ENCODE measurements at regions of chr15 and their contacts with region 1.

Region 1: DNA sequence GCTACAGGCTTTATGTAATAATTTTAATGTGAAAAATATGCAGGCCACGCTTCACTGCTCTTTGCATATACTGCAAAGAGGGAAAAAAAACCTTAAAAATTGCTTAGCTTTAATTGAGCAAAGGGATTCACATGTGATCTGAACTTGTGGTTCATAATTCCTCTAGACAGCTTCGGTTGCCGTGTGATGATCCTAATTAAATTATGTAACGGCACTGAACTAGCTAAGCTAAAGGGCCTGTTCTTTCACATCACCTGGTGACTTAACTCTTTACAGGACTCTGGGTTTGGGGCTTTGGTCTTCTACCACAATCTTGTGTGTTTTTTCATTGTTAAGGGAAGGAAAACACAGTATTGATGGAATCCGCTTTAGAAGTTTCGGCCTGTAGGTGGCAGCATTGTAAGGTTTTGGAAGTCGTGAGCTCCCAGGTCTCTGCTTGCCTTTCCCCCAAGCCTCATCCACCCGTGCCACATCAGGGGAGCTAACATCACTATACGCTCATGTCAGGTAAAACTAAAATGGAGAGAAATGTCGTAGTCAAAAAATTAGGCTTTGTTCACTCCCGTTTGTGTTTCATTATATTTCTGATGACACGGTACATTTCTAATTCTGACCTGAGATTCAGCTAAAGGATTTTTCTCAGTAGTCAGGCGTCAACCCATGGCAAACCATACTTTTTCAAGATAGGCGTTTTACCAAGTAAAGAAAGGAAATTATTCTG is 205.6 kb upstream of the DPH6 start:
- DNase-seq: peak; percentile 28 to 62
- ATAC-seq: peak; percentile 68 to 89 (median 72)
- H3K4me3 ChIP-seq: peak overlapping the region; percentile 10
- H3K27ac ChIP-seq: no peak overlapping the region
- H3K4me1 ChIP-seq: no peaks in the 10 kb centered on the region
- H3K27me3 ChIP-seq: no peaks in the 10 kb centered on the region
- CTCF ChIP-seq: peak; percentile 79

Region 2: DNA sequence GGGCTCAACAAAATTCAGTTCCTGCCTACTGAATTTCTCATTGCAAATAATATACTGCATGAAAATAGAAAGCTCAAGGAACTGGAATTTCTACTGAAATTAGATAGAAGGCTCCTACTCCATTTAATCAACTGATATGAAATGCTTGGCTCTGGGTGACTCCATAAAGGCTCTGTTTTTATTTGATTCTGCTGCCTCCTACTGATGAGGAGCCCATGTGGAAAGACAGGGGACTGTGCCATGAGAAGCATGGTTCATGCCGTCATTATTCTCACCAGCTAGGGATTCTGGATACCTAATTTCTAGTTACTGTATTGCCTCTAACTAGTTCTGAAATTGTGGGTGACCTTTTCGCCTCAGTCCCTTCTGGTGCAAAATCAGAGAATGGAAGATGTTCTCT is 160.6 kb after region 1 on chr15:
- intact Hi-C with region 1: loop called in 1 of 2 experiments (anchors 10 kb)
- DNase-seq: no peak
- ATAC-seq: peak in 1 of 4 donors; percentile 44
- H3K4me3 ChIP-seq: no peak overlapping the region
- H3K27ac ChIP-seq: no peak overlapping the region
- H3K4me1 ChIP-seq: no peaks in the 10 kb centered on the region
- H3K27me3 ChIP-seq: peaks cover 0 to 4% (median 0%) of the 10 kb centered on the region in 3 donors
- CTCF ChIP-seq: peak; percentile 7

Measured in psoas muscle (tissue), 8 donors.